ENCODE measurements at regions of chr9 and their contacts with region 1.

Region 1: DNA sequence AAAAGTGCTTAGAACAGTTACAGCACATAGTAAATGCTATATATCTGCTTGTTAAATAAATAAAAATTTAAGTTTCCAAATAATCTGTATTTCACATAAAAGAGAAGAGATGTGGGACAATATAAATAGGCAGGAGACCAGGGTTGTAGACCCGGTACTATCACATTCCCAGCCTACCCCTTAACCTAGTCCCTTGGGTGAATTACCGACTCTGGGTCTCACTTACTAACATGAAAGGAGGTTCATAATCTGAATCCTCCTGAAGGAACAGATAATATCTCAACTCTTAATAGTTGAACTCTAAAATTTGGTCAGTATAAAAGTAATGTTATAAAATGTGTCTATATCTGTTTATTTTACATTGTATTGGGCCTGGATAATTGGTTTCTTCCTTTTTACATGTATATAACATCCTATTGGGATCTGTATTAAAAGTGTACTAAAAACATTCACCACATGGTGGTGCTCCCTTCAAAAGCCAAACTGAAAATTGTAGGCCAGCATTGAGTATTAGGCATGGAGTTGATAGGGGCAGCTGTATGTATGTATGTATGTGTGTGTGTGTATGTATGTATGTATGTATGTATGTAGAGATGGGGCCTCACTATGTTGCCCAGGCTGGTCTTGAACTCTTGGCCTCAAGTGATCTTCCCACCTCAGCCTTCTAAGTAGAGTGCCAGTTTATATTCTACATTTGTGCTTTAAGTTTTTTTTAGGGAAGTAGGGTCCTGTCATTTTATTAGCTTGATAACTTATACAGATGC is 64.2 kb upstream of the ABL1 start:
- DNase-seq: no peak
- H3K4me3 ChIP-seq: no peak overlapping the region
- H3K27ac ChIP-seq: no peak overlapping the region
- H3K4me1 ChIP-seq: peaks cover 4 to 17% (median 6%) of the 10 kb centered on the region in 4 experiments
- H3K27me3 ChIP-seq: no peaks in the 10 kb centered on the region
- CTCF ChIP-seq: peak in 2 of 3 experiments; percentile 48 to 54; a peak in 2 of 4 replicates
- EP300 ChIP-seq: no peak
- POLR2A ChIP-seq: no peak
- RAD21 ChIP-seq: peak; percentile 73 to 76

Region 2: GRCh38 chr9:130512199-130512598 is 258.7 kb before region 1 on chr9:
- CTCF ChIA-PET with region 1: no interaction called
- POLR2A ChIA-PET with region 1: no interaction called
- DNase-seq: no peak
- H3K4me3 ChIP-seq: no peak overlapping the region
- H3K27ac ChIP-seq: no peak overlapping the region
- H3K4me1 ChIP-seq: no peaks in the 10 kb centered on the region
- H3K27me3 ChIP-seq: no peaks in the 10 kb centered on the region
- CTCF ChIP-seq: no peak
- EP300 ChIP-seq: no peak
- POLR2A ChIP-seq: no peak
- RAD21 ChIP-seq: no peak

Region 3: DNA sequence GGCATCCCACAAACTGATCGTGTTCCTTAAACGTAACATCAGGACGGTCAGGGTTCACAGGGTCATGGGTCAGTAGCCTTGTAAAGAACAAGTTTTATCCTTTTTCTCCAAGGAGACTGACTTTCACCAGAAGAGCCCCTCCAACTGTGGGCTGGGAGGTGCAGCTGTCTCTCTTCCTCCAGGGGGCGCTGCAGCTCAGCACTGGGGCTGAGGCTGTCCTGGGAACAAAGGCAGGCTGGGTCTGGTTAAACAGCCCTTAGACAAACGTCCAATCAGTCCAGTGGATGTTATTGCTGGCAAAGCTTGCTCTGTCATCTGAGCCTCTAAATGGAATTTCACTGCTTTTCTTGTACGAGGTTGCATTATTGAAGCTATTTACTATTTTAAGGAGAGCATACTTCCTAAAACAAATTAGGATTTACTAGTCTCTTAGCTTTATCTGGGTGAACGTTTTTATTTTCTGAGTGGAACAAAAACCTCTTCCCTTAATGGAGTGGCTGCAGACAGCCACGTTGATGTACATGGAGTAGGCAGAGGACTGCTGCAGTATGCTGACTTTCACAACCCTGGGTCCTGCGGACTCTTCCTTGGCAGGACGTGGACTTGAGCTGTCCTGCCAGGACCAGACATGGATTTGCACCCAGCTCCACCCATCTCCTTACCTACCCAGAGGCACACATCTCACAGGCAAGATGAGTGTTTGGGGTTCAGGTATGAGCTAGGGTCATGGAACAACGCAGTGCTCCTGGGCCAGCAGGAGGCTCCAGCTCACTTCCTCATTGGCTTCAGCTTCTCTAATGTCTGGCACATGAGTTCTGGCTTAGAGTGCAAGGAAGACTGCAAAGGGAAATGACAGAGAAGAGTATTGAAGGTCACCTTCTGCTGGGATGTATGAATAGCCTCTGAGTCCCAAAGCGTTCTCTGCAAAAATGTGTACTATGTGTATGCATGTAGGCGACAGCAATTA is 69.5 kb before region 1 on chr9:
- CTCF ChIA-PET with region 1: interaction called, 10 read pairs
- POLR2A ChIA-PET with region 1: no interaction called
- DNase-seq: peak in 1 of 2 experiments; percentile 93
- H3K4me3 ChIP-seq: no peak overlapping the region
- H3K27ac ChIP-seq: 0 out of 2 replicates have a peak overlapping the region, but pooled peaks have one; percentile 2
- H3K4me1 ChIP-seq: no peaks in the 10 kb centered on the region; a peak in 1 of 7 replicates
- H3K27me3 ChIP-seq: no peaks in the 10 kb centered on the region
- CTCF ChIP-seq: peak; percentile 87 to 98 (median 97)
- EP300 ChIP-seq: no peak
- POLR2A ChIP-seq: no peak
- RAD21 ChIP-seq: peak; percentile 75 to 79

Region 4: DNA sequence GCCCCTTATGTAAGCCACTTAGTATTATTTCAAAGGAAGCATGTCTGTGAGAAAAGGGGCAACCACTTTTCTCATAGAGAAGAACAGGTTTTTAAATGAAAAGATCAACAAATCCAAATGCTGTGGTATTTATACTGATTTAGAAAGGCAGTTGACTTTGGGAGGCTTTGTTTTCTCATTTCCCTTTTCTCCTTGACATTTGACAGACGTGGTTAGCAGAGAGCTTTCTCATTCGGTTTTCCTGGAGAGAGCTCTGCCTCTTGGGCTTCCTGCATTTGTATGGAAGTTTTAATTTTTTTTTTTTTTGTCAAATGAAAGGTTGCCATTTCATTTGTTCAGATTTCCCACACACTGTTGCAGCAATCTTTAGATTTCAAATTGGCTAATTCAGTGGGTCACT is 14.8 kb before region 1 on chr9:
- CTCF ChIA-PET with region 1: interaction called, 16 read pairs
- POLR2A ChIA-PET with region 1: interaction called, 5 read pairs
- DNase-seq: no peak
- H3K4me3 ChIP-seq: no peak overlapping the region
- H3K27ac ChIP-seq: no peak overlapping the region
- H3K4me1 ChIP-seq: peaks cover 2 to 14% (median 6%) of the 10 kb centered on the region in 4 experiments; a peak in 5 of 7 replicates
- H3K27me3 ChIP-seq: no peaks in the 10 kb centered on the region
- CTCF ChIP-seq: no peak
- EP300 ChIP-seq: no peak
- POLR2A ChIP-seq: no peak
- RAD21 ChIP-seq: no peak

Region 5: DNA sequence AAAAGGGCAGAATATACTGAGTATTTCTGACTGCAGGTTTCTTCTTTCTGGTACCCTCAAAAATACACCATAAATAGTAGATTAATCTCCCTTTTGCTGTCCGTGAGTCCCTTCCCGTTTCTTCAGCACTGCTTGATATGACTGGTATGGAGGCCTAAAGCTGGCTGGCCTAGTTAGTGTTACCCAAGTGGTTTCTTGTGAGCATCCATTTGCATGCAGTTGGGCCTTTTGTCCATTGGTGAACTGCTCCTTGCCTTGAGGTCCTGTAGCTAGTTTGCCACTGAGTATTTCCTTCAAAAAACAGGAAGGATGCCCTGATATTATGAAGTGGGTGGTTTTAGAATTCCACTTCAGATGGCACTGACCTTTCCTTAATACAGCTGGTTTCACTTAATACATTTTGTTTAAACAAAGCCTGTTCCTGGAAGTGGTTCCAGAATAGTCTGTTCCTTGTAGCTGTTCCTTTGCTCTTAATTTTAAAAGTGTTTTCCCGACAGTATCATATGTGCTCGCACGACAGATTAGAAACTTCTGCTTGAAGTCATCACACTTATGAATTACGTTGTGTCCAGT is 24.1 kb after region 1 on chr9:
- CTCF ChIA-PET with region 1: interaction called, 11 read pairs
- POLR2A ChIA-PET with region 1: no interaction called
- DNase-seq: no peak
- H3K4me3 ChIP-seq: no peak overlapping the region
- H3K27ac ChIP-seq: no peak overlapping the region
- H3K4me1 ChIP-seq: no peaks in the 10 kb centered on the region
- H3K27me3 ChIP-seq: no peaks in the 10 kb centered on the region
- CTCF ChIP-seq: no peak
- EP300 ChIP-seq: no peak
- POLR2A ChIP-seq: no peak
- RAD21 ChIP-seq: no peak

Region 6: GRCh38 chr9:130834371-130835311 is 63.8 kb after region 1 on chr9 and contains the start of gene ABL1:
- CTCF ChIA-PET with region 1: interaction called, 11 read pairs
- POLR2A ChIA-PET with region 1: no interaction called
- DNase-seq: peak in 1 of 2 experiments; percentile 80
- H3K4me3 ChIP-seq: peak within 1 kb of the TSS; percentile 84 to 98 (median 91)
- H3K27ac ChIP-seq: peak within 1 kb of the TSS; percentile 72
- H3K4me1 ChIP-seq: peaks cover 9 to 22% (median 14%) of the 10 kb centered on the region in 4 experiments
- H3K27me3 ChIP-seq: no peaks in the 10 kb centered on the region
- CTCF ChIP-seq: no peak
- EP300 ChIP-seq: no peak
- POLR2A ChIP-seq: peak in 1 of 2 experiments; percentile 13; a peak in 1 of 3 replicates
- RAD21 ChIP-seq: no peak
- total RNA-seq, gene ABL1: 104 and 110 TPM in 2 replicates